ENCODE measurements at regions of chr2 and their contacts with region 1.

Region 1: DNA sequence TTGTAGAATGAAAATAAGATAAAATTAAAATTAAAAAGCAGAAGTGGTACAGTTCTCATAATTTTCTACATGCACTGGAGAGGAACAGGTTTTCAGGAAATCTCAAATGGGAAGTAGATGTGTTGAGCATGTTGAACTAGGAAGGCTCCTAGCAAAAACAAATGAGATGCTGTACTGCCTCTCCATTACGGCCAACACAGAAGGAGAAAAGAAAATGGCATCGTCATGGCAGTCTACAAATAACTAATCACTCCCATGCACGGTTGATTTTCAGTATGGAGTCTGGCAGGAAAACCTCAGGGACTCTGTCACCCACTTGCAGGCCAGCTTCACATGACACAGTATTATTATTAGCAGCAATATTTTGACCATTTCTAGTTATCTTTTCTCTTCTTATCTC is 278.7 kb downstream of the NRXN1 start:
- DNase-seq: no peak
- H3K4me3 Mint-ChIP-seq: no peak overlapping the region
- H3K27ac Mint-ChIP-seq: no peak overlapping the region
- H3K4me1 Mint-ChIP-seq: no peaks in the 10 kb centered on the region
- H3K27me3 Mint-ChIP-seq: no peaks in the 10 kb centered on the region

Region 2: DNA sequence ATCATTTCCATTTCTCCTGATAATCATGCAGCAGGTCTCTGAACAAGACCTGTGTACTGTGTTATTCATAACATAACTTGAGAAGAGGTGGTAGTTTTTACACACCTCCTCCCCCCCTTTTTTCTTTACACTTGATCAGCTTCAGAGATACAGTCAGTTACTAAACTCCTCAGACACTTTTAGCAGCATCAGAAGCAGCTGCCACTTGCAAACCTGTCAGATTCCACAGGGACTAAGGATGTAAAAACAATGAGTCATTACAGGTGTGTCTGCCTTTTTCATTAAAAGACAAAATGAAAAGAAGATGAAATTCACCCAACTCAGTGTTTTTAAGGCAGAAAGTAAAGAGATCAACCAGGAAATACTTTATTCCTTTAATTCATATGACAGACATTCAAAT is 24.7 kb after region 1 on chr2:
- intact Hi-C with region 1: loop called (anchors 1 kb)
- DNase-seq: no peak
- H3K4me3 Mint-ChIP-seq: no peak overlapping the region
- H3K27ac Mint-ChIP-seq: no peak overlapping the region
- H3K4me1 Mint-ChIP-seq: no peaks in the 10 kb centered on the region
- H3K27me3 Mint-ChIP-seq: no peaks in the 10 kb centered on the region